ENCODE measurements at regions of chr15 and their contacts with region 1.

Region 1: GRCh38 chr15:31294067-31294466 is 32.6 kb upstream of the KLF13 start:
- DNase-seq: no peak
- H3K4me3 ChIP-seq: no peak overlapping the region
- H3K27me3 ChIP-seq: peaks cover 13% of the 10 kb centered on the region
- CTCF ChIP-seq: no peak

Region 2: GRCh38 chr15:31280046-31280830 is 13.8 kb before region 1 on chr15:
- CTCF ChIA-PET with region 1: no interaction called
- POLR2A ChIA-PET with region 1: interaction called, 11 read pairs
- DNase-seq: no peak
- H3K4me3 ChIP-seq: no peak overlapping the region
- H3K27me3 ChIP-seq: peaks cover 5% of the 10 kb centered on the region; the same call in 1 of the 2 replicates
- CTCF ChIP-seq: no peak

Measured in BJ (cell line).